GM12878 (cell line): ENCODE measurements at regions of chr12 and their contacts with region 1.

Region 1: GRCh38 chr12:21438643-21439042 is 1.2 kb downstream of the PYROXD1 start:
- DNase-seq: no peak
- ATAC-seq: 0 out of 3 replicates have a peak, but pooled peaks have one; percentile 6
- H3K4me3 ChIP-seq: peak overlapping the region; percentile 88
- H3K27ac ChIP-seq: peak overlapping the region; percentile 86
- H3K4me1 ChIP-seq: no peaks in the 10 kb centered on the region
- H3K27me3 ChIP-seq: no peaks in the 10 kb centered on the region
- CTCF ChIP-seq: no peak
- EP300 ChIP-seq: no peak
- POLR2A ChIP-seq: no peak
- RAD21 ChIP-seq: no peak

Region 2: GRCh38 chr12:21501379-21501956 is 62.8 kb after region 1 on chr12 and contains the starts of genes GOLT1B and RECQL:
- CTCF ChIA-PET with region 1: interaction called, 3 read pairs
- POLR2A ChIA-PET with region 1: no interaction called
- RAD21 ChIA-PET with region 1: no interaction called
- SMC1A ChIA-PET with region 1: no interaction called
- in situ Hi-C with region 1: no loop called
- intact Hi-C with region 1: loop called (anchors 5 kb)
- DNase-seq: peak; percentile 98
- ATAC-seq: peak; percentile 96
- H3K4me3 ChIP-seq: peak within 1 kb of the TSS; percentile 94
- H3K27ac ChIP-seq: peak within 1 kb of the TSS; percentile 64
- H3K4me1 ChIP-seq: peaks cover 9% of the 10 kb centered on the region
- H3K27me3 ChIP-seq: no peaks in the 10 kb centered on the region
- CTCF ChIP-seq: no peak
- EP300 ChIP-seq: no peak
- POLR2A ChIP-seq: peak; percentile 87
- RAD21 ChIP-seq: no peak
- polyA plus RNA-seq, gene GOLT1B: 60.0 to 77.4 TPM
- polyA plus RNA-seq, gene RECQL: 59.4 to 76.5 TPM